ENCODE measurements at regions of chr19 and their contacts with region 1.

Region 1: DNA sequence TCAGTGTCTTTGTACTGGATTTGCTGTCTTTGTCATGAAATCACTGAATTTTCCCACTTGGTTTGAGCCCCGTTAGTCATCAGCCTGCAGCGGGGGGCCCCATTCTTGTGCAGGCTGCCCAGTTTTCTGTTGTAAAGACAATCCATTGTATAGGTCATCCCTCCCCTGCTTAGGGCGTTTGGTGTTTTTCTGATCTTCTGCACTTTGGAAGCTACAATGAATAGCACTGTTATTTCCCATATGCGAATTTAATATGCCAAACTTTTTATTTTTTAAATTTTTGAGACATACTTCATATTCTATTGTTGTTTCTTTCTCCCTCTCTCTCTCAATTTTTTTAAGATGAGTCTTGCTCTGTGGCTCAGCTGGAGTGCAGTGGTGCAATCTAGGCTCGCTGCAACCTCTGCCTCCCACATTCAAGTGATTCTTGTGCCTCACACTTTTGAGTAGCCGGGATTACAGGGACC is 9.0 kb downstream of the SLC27A1 start:
- DNase-seq: peak in 5 of 10 donors; percentile 44 to 74 (median 67)
- H3K4me3 ChIP-seq: peak overlapping the region in 7 of 59 donors; percentile 2 to 27 (median 16)
- H3K27ac ChIP-seq: peak overlapping the region in 58 of 59 donors; percentile 13 to 99 (median 94)
- H3K27me3 ChIP-seq: no peaks in the 10 kb centered on the region
- CTCF ChIP-seq: peak in 1 of 56 donors; percentile 16

Region 2: DNA sequence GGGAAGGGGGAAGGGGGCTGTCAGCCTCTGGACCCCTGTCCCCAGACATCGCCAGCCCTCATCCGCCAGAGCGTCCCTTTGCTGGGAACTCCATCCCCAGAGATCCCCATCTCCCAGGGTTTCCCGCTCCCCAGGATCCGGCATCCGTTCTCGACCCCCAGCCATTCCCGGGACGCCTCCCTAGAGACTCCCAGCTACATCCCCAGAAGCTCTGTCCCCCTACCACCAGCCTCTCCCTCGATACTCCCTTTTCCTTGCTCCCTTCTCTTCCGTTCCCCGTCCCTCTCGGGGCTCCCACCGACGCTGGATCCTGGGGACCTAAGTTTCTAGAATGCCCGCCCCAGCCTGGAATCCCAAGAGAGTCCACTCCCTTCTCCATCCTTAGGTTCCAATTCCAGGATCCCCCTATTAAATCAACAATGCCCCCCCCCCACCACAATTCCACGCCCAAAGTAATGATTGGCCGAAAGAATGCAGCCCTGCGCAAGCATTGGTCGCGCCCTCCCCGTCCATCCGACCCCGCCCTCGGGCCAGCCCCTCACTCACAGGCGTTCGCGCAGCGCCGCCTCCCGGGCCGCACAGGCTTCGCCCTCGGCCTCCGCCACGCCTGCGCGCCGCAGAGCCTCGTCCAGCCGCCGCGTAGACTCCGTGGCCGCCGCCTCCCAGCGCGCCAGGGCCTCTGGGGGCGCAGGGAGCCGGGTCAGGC is 88.5 kb before region 1 on chr19:
- intact Hi-C with region 1: no loop called
- DNase-seq: peak; percentile 46 to 91 (median 86)
- H3K4me3 ChIP-seq: peak overlapping the region; percentile 36 to 73 (median 60)
- H3K27ac ChIP-seq: peak overlapping the region in 4 of 59 donors; percentile 25 to 62 (median 34)
- H3K27me3 ChIP-seq: peaks cover 0 to 21% (median 0%) of the 10 kb centered on the region in 45 donors
- CTCF ChIP-seq: peak; percentile 35 to 87 (median 72)

Region 3: GRCh38 chr19:17496337-17496997 is 17.1 kb after region 1 on chr19:
- intact Hi-C with region 1: loop called in 1 of 2 experiments (anchors 2 kb)
- DNase-seq: peak in 5 of 10 donors; percentile 25 to 67 (median 44)
- H3K4me3 ChIP-seq: no peak overlapping the region
- H3K27ac ChIP-seq: peak overlapping the region in 47 of 59 donors; percentile 6 to 89 (median 74)
- H3K27me3 ChIP-seq: no peaks in the 10 kb centered on the region
- CTCF ChIP-seq: peak; percentile 42 to 92 (median 78)